CD4-positive, alpha-beta T cell (primary cell): ENCODE measurements at regions of chr7 and their contacts with region 1.

Region 1: DNA sequence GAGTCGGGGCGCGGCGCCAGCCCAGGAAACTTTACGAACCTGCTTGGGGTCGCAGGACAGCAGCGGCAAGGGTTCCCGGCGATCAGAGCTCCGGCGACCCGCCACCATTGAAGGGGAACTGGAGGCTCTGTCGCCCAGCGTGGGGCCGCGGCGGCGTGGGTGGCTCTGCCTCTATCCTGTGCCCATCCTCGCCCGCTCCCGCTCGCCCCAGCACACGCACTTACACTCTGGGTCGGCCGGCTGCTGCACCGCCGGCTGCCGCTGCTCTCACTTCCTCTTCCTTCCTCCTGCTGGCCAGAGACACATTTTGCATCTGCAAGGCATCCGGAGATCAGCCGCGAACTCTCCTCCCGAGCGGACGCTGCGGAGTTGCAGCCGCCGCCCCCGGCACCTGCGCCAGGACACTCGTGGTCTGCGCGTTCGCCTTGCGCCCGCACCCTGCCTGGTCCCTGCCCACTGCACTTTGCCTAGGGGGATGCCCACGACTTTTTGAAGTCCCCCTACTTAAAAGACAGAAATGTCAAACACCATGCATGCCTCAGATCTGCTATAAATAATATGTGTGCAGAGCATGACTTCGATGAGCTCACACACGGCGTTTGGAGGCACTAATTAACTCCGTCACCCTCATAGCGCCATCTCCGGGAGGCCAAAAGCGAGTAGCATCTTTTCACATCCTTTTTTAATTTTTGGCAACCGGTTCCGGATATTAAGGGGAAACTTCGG is at the start of gene ELMO1:
- DNase-seq: peak; percentile 62 to 93 (median 74)
- ATAC-seq: peak; percentile 74
- H3K4me3 ChIP-seq: peak within 1 kb of the TSS; percentile 96
- H3K4me3 Mint-ChIP-seq: peak within 1 kb of the TSS; percentile 96
- H3K27ac ChIP-seq: peak within 1 kb of the TSS; percentile 86 to 97
- H3K27ac Mint-ChIP-seq: peak within 1 kb of the TSS; percentile 97
- H3K4me1 ChIP-seq: peaks cover 26% of the 10 kb centered on the region
- H3K4me1 Mint-ChIP-seq: peaks cover 60% of the 10 kb centered on the region
- H3K27me3 ChIP-seq: no peaks in the 10 kb centered on the region
- H3K27me3 Mint-ChIP-seq: peaks cover 11% of the 10 kb centered on the region
- CTCF ChIP-seq: peak; percentile 65
- total RNA-seq, gene ELMO1: 117 to 120 TPM

Region 2: DNA sequence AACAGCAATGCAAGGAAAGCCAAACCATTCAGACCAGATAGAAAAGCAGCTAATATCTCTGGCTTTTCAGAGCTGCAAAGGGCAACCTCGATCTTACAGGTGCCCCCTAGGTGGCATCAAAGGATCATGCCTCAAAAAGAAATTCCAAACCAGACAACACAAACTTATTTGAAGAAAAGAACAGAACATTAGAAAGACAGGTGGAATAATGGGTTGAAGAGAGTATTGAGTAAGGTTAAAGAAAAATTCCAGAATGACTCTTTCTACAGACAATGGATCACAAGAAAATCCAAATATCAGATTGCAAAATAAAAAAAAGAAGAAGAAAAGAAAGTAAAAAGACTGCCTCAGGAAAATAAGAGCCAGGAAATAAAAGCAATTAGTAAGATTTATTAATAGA is 213.9 kb before region 1 on chr7:
- CTCF ChIA-PET with region 1: interaction called, 4 read pairs
- POLR2A ChIA-PET with region 1: interaction called, 5 read pairs
- intact Hi-C with region 1: loop called in 1 of 2 experiments (anchors 10 kb)
- DNase-seq: peak in 6 of 14 experiments; percentile 5 to 61 (median 34)
- ATAC-seq: no peak
- H3K4me3 ChIP-seq: no peak overlapping the region
- H3K4me3 Mint-ChIP-seq: no peak overlapping the region
- H3K27ac ChIP-seq: no peak overlapping the region
- H3K27ac Mint-ChIP-seq: no peak overlapping the region
- H3K4me1 ChIP-seq: peaks cover 4% of the 10 kb centered on the region
- H3K4me1 Mint-ChIP-seq: peaks cover 33% of the 10 kb centered on the region
- H3K27me3 ChIP-seq: no peaks in the 10 kb centered on the region
- H3K27me3 Mint-ChIP-seq: no peaks in the 10 kb centered on the region
- CTCF ChIP-seq: peak; percentile 49

Region 3: DNA sequence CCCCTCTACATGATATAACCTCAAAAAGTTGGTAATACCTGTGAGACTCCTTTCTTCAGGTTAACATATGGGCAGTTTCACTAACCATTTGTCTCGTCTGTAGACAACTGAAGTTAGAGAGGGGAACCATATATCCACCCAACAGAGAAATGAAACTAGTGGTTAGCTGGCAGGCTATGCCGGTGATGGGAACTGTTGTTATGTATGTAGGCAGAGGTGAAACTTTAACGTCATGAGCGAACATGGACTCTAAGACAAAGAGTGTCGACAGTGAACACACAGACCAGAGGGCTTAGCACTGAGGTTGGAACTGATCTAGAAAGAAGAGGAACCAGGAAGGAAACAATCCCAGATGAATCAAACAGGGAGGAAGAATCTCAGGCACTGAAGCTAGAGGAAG is 112.5 kb before region 1 on chr7:
- CTCF ChIA-PET with region 1: no interaction called
- POLR2A ChIA-PET with region 1: interaction called, 14 read pairs
- intact Hi-C with region 1: no loop called
- DNase-seq: peak in 4 of 14 experiments; percentile 13 to 58 (median 54)
- ATAC-seq: peak; percentile 76
- H3K4me3 ChIP-seq: no peak overlapping the region
- H3K4me3 Mint-ChIP-seq: peak overlapping the region; percentile 71
- H3K27ac ChIP-seq: no peak overlapping the region
- H3K27ac Mint-ChIP-seq: peak overlapping the region; percentile 76
- H3K4me1 ChIP-seq: peaks cover 25% of the 10 kb centered on the region
- H3K4me1 Mint-ChIP-seq: peaks cover 80% of the 10 kb centered on the region
- H3K27me3 ChIP-seq: no peaks in the 10 kb centered on the region
- H3K27me3 Mint-ChIP-seq: no peaks in the 10 kb centered on the region
- CTCF ChIP-seq: no peak

Region 4: GRCh38 chr7:37352974-37353948 is 95.5 kb before region 1 on chr7:
- CTCF ChIA-PET with region 1: interaction called, 18 read pairs
- POLR2A ChIA-PET with region 1: interaction called, 134 read pairs
- intact Hi-C with region 1: loop called (anchors 2 kb)
- DNase-seq: peak; percentile 50 to 91 (median 66)
- ATAC-seq: peak; percentile 83
- H3K4me3 ChIP-seq: peak overlapping the region; percentile 81
- H3K4me3 Mint-ChIP-seq: peak overlapping the region; percentile 93
- H3K27ac ChIP-seq: peak overlapping the region; percentile 63 to 69
- H3K27ac Mint-ChIP-seq: peak overlapping the region; percentile 90
- H3K4me1 ChIP-seq: peaks cover 59% of the 10 kb centered on the region
- H3K4me1 Mint-ChIP-seq: peaks cover 90% of the 10 kb centered on the region
- H3K27me3 ChIP-seq: no peaks in the 10 kb centered on the region
- H3K27me3 Mint-ChIP-seq: no peaks in the 10 kb centered on the region
- CTCF ChIP-seq: peak; percentile 97

Region 5: DNA sequence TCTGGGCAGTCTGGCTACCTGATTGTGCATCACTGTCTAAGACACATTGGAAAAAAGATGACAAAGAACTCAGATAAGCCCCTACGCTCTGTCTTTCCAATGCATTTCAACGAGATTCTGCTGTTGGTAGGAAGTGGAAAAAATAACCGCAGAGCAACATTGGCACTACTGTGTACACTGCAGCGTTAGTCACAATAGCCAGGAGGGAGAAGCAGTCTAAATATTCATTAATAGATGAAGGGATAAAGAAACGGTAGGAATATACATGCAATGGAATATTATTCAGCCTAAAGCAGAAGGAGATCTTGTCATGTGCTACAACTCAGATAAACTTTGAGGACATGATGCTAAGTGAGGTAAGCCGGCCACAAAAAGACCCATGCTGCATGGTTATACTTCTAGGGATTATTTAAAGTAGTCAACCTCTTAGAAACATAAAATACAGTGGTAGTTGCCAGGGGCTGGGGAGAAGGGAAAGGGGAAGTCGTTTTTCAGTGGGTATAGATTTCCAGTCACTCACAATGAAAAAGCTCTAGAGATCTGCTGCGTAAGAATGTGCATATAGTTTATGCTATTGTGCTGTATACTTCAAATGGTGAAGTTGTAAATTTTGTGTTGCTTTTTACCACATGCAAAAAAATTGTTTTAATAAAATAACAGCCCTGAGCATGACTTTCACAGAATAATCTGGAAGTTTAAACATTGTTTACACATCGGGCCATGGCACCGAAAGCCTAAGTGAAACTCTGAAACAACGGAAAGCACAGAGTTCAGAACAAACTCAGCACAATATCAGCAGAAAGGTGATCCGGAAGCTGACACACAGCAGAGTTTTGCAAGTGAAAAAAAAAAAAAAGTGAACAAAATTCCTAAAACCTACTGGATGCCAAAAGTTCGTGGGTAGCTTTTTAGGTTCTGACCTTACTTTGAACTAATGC is 40.2 kb before region 1 on chr7:
- CTCF ChIA-PET with region 1: interaction called, 8 read pairs
- POLR2A ChIA-PET with region 1: interaction called, 73 read pairs
- intact Hi-C with region 1: loop called (anchors 2 to 5 kb)
- DNase-seq: peak in 4 of 14 experiments; percentile 33 to 64 (median 50)
- ATAC-seq: peak; percentile 75
- H3K4me3 ChIP-seq: peak overlapping the region; percentile 49
- H3K4me3 Mint-ChIP-seq: peak overlapping the region; percentile 91
- H3K27ac ChIP-seq: peak overlapping the region in 1 of 2 donors; percentile 26
- H3K27ac Mint-ChIP-seq: peak overlapping the region; percentile 81
- H3K4me1 ChIP-seq: peaks cover 21% of the 10 kb centered on the region
- H3K4me1 Mint-ChIP-seq: peaks cover 75% of the 10 kb centered on the region
- H3K27me3 ChIP-seq: no peaks in the 10 kb centered on the region
- H3K27me3 Mint-ChIP-seq: no peaks in the 10 kb centered on the region
- CTCF ChIP-seq: no peak

Region 6: DNA sequence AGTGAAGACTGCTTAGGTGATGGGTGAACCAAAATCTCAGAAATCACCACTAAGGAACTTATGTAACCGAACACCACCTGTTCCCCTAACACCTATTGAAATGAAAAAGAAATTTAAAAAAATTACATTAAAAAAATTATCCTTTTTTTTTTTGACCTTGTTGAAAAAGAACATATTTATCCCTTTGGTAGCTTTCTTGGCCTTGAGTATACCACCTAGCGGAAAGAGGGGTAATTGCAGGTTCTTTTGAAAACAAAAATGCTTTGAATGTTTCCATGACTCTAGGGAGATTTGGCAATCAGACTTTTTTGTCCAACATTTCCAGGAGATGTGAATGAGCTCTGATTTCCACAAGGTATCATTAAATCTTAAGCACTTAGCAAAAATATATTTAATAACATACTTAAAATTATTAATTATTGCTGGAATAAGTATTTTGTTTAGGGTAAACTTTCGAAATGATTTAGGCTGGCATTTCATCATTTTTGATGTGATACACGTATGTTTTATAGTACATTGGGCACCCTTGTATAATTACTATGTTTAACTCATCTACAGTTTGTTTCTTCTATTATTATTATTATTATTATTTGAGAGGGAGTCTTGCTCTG is 46.9 kb after region 1 on chr7:
- CTCF ChIA-PET with region 1: no interaction called
- POLR2A ChIA-PET with region 1: interaction called, 4 read pairs
- intact Hi-C with region 1: loop called in 1 of 2 experiments (anchors 5 kb)
- DNase-seq: peak in 3 of 14 experiments; percentile 47 to 59 (median 51)
- ATAC-seq: peak; percentile 68
- H3K4me3 ChIP-seq: no peak overlapping the region
- H3K4me3 Mint-ChIP-seq: no peak overlapping the region
- H3K27ac ChIP-seq: no peak overlapping the region
- H3K27ac Mint-ChIP-seq: no peak overlapping the region
- H3K4me1 ChIP-seq: no peaks in the 10 kb centered on the region
- H3K4me1 Mint-ChIP-seq: no peaks in the 10 kb centered on the region
- H3K27me3 ChIP-seq: no peaks in the 10 kb centered on the region
- H3K27me3 Mint-ChIP-seq: no peaks in the 10 kb centered on the region
- CTCF ChIP-seq: peak; percentile 89